Ascending aorta (tissue), 2 donors: ENCODE measurements at regions of chr2 and their contacts with region 1.

Region 1: DNA sequence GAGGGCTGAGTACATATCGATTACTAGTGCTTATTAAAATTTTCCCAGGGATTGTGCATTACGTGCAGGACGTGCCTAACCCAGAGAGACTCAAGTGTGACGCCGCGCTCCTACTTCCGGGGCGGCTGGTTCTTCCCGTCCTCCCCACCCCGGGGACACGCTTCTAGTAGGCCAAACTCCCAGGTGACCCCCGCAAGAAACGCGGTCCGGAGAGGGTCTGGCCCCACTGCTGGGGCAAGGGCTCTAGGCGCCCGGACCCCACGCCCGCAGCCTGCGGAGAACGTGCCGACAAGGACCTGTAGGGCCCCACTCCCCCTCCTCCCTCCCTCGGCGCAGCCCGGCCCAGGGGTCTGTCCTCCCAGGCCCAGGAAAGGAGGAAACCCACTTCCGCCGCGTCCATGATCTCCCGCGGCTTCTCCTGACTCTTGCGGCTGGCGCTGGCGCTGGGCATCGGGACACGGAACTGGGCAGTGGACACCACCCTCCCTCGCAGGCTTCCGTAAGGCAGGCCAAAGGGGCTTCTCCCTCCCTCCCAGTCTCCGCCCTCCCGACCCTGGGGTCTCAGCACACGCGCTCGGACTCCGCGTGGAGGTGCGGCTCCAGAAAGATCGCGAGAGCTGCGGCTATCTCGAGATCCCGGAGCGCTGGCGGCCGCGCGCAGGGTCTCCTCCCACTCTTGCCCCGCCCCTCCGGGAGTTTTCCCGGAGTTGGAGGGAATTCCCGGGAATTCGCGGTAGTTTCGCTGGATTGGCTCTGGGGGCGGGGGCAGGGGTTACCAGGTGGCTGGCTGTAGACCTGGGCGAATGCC is at the start of gene DARS1:
- DNase-seq: peak; percentile 59 to 95
- H3K4me3 ChIP-seq: peak within 1 kb of the TSS; percentile 83 to 92
- H3K27ac ChIP-seq: peak within 1 kb of the TSS; percentile 92 to 94
- H3K4me1 ChIP-seq: peaks cover 4 to 7% of the 10 kb centered on the region in 2 donors
- H3K27me3 ChIP-seq: no peaks in the 10 kb centered on the region
- CTCF ChIP-seq: no peak
- total RNA-seq, gene DARS1: 11.6 TPM

Region 2: DNA sequence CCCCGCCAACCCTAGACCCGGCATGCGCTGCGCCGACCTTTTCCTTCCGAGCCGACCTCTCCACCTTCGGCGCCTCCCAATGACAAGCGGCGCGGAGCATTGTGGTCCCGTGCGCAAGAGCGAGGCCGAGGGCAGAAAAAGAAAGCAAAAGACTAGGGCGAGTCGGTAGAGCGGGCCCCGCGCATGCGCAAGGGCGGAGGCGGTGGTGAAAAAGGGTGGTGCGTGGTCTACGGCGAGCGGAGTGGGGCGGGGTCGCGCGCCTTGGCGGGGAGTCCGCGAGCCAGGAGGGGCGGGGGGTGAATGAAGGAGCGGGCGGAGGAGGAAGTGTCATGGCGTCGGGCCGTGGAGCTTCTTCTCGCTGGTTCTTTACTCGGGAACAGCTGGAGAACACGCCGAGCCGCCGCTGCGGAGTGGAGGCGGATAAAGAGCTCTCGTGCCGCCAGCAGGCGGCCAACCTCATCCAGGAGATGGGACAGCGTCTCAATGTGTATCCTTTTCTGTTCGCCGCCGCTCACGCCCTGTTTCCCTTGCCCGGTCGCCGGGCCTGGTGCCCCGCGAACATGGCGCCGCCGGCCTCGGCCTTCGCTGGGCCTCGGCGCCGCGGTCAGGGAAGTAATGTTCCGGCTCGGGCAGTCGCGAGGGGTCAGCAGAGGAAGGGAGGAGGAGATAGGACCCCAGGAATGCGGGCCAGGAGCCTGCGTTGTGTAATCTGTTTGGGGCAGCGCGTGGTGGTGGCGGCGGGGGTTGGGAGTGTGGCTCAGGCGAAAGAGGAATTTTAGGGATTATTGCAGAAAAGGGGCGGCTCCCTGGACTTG is 1066.5 kb before region 1 on chr2 and contains the start of gene CCNT2:
- intact Hi-C with region 1: loop called (anchors 2 kb)
- DNase-seq: peak; percentile 97 to 99
- H3K4me3 ChIP-seq: peak within 1 kb of the TSS; percentile 83 to 88
- H3K27ac ChIP-seq: peak within 1 kb of the TSS; percentile 96 to 98
- H3K4me1 ChIP-seq: peaks cover 5 to 25% of the 10 kb centered on the region in 2 donors
- H3K27me3 ChIP-seq: no peaks in the 10 kb centered on the region
- CTCF ChIP-seq: no peak
- total RNA-seq, gene CCNT2: 14.2 TPM

Region 3: GRCh38 chr2:135052042-135052876 is 933.0 kb before region 1 on chr2 and contains the start of gene RAB3GAP1:
- intact Hi-C with region 1: loop called (anchors 10 kb)
- DNase-seq: peak; percentile 33 to 90
- H3K4me3 ChIP-seq: peak within 1 kb of the TSS; percentile 71 to 75
- H3K27ac ChIP-seq: peak within 1 kb of the TSS; percentile 96 to 97
- H3K4me1 ChIP-seq: peaks cover 5 to 35% of the 10 kb centered on the region in 2 donors
- H3K27me3 ChIP-seq: no peaks in the 10 kb centered on the region
- CTCF ChIP-seq: no peak
- total RNA-seq, gene RAB3GAP1: 14.8 TPM

Region 4: DNA sequence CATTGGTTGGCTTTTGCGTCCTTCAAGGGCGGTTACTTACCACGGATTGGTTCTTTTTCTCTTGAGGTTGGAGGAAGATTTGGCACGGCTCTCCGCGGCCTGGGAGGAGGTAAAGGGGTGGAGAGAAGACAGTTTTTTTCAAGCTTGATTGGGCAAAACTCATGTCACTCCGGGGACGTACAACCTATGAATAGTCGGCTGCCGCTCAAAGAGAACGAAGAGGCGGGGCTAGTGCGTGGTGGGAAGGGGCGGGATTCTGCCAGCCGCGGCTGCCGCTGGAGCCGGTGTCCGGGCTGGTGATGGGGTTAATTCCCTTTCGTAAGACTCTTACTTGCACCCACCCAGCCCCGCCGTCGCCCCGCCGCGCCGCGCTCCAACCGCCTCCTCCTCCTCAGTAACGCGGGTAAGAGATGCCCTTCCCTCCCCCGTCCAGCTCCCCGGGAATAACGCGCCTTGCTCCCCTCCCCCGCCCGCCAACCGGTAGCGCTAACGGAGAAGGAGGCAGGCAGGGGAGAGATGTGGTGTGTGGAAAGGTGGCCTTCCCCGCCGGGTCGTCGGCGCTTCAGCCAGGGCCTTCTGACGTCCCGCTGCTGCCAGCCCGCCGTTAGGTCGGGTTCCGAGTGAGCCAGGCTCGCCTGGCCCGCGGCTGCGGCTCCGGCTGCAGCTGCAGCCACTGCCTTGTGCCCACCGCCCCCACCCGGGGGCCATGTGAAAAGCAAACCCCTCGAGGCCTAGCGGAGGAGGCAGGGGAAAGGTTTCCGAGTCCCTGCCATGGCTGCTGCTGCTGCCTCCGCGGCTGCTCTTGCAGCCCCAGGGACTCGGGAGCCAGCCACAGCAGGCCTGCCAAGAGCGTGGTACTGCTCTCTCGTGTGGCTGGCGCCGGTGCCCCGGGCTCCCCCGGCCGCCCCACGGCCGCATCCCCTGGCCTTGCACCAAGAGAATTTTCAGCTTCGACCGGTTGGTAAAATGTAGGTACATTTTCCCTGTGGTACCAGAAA is 453.7 kb before region 1 on chr2 and contains the start of gene R3HDM1:
- intact Hi-C with region 1: loop called (anchors 2 kb)
- DNase-seq: peak; percentile 97 to 100
- H3K4me3 ChIP-seq: peak within 1 kb of the TSS; percentile 78 to 82
- H3K27ac ChIP-seq: peak within 1 kb of the TSS; percentile 86 to 95
- H3K4me1 ChIP-seq: peaks cover 0 to 10% of the 10 kb centered on the region in 2 donors
- H3K27me3 ChIP-seq: no peaks in the 10 kb centered on the region
- CTCF ChIP-seq: peak in 1 of 3 experiments; percentile 4
- total RNA-seq, gene R3HDM1: 5.0 TPM

Region 5: GRCh38 chr2:135657806-135658582 is 327.2 kb before region 1 on chr2:
- intact Hi-C with region 1: no loop called
- DNase-seq: no peak
- H3K4me3 ChIP-seq: no peak overlapping the region
- H3K27ac ChIP-seq: no peak overlapping the region
- H3K4me1 ChIP-seq: no peaks in the 10 kb centered on the region
- H3K27me3 ChIP-seq: no peaks in the 10 kb centered on the region
- CTCF ChIP-seq: no peak

Region 6: GRCh38 chr2:135741395-135742324 is 243.6 kb before region 1 on chr2 and contains the start of gene UBXN4:
- intact Hi-C with region 1: loop called (anchors 2 kb)
- DNase-seq: peak; percentile 96 to 99
- H3K4me3 ChIP-seq: peak within 1 kb of the TSS; percentile 81 to 92
- H3K27ac ChIP-seq: peak within 1 kb of the TSS; percentile 99
- H3K4me1 ChIP-seq: peaks cover 0 to 17% of the 10 kb centered on the region in 2 donors
- H3K27me3 ChIP-seq: no peaks in the 10 kb centered on the region
- CTCF ChIP-seq: peak in 2 of 3 experiments; percentile 21 to 37
- total RNA-seq, gene UBXN4: 14.8 TPM

Region 7: GRCh38 chr2:135840601-135841000 is 144.6 kb before region 1 on chr2:
- intact Hi-C with region 1: no loop called
- DNase-seq: no peak
- H3K4me3 ChIP-seq: no peak overlapping the region
- H3K27ac ChIP-seq: peak overlapping the region in 1 of 2 donors; percentile 60
- H3K4me1 ChIP-seq: peaks cover 0 to 2% of the 10 kb centered on the region in 2 donors
- H3K27me3 ChIP-seq: no peaks in the 10 kb centered on the region
- CTCF ChIP-seq: no peak

Region 8: GRCh38 chr2:135876066-135876711 is 109.0 kb before region 1 on chr2 and contains the start of gene MCM6:
- intact Hi-C with region 1: loop called (anchors 1 kb)
- DNase-seq: peak; percentile 92 to 98
- H3K4me3 ChIP-seq: peak within 1 kb of the TSS; percentile 82 to 83
- H3K27ac ChIP-seq: peak within 1 kb of the TSS; percentile 87 to 91
- H3K4me1 ChIP-seq: peaks cover 0 to 5% of the 10 kb centered on the region in 2 donors
- H3K27me3 ChIP-seq: no peaks in the 10 kb centered on the region
- CTCF ChIP-seq: no peak
- total RNA-seq, gene MCM6: 62.5 TPM

Region 9: DNA sequence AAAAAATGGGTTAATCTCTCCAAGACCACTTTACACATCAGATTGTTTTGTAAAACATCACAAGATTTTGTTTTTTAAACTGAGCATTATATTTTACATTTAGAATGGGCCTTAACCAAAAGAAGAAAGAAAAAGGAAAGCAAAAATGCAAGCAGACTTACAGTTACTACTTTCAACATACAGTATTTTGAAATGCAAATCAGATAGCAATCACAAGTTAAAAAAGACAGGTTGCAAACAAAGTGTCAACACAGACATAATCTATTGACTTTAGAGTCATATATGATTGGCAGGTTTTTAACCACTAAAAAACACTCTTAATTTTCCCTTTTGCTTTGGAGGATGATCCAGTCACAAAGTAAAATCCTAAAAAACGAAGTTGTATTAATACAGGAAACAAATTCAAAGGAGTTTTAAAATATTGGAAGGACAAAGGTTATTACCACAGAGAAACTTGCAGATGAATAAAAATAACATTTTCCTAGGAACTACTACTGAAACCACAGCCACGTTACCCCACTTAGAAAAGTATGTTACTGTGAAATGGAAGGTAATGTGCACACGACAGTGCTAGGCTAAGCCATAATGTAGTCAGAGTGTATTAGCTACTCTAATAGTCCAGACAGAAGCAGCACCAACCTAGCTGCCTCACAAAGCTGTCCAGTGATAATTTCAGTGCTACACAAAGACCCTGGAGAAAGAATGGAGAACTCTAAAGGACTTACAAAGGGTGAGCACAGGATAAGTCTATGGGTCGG is 22.7 kb before region 1 on chr2:
- intact Hi-C with region 1: no loop called
- DNase-seq: no peak
- H3K4me3 ChIP-seq: no peak overlapping the region
- H3K27ac ChIP-seq: no peak overlapping the region
- H3K4me1 ChIP-seq: no peaks in the 10 kb centered on the region
- H3K27me3 ChIP-seq: no peaks in the 10 kb centered on the region
- CTCF ChIP-seq: no peak

Region 10: DNA sequence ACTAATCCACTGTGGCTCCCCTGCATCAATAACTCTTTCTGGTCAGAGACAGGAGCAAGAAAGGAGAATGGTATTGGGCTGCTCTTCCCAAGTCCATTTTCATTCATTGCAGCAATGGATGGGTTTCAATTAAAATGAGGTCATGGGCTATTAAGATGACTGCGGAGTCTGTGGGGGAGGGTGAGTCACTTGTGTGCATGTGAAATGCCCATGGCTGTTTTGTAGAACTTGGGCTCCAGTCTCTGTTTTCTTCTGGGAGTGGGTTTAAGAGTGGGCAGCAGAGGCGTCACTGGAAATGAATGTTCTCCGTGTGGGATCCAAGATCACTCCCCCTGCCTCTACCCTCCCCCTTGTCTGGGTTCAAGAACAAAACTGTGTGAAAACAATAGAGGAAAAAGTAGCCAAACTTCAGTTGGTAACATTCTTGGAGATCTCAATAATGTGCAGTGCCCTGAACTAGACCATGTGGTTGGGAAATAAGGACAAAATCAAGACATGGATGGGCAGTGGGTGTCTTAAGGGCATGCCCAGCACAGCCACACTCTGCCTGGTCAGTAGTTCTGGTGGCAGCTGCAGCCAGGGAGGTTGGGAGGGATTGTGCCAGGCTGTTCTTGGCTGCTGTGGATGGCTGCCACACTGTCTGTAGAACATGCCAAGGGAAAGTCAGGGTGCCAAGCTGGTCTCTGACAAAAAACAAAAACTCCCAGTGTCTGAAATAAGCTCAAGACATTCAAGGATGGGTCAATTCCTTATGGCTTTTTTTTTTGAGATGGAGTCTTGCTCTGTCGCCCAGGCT is 201.0 kb after region 1 on chr2:
- intact Hi-C with region 1: no loop called
- DNase-seq: no peak
- H3K4me3 ChIP-seq: no peak overlapping the region
- H3K27ac ChIP-seq: no peak overlapping the region
- H3K4me1 ChIP-seq: no peaks in the 10 kb centered on the region
- H3K27me3 ChIP-seq: no peaks in the 10 kb centered on the region
- CTCF ChIP-seq: no peak

Region 11: GRCh38 chr2:136653861-136654260 is 668.6 kb after region 1 on chr2:
- intact Hi-C with region 1: loop called (anchors 5 kb)
- DNase-seq: peak in 1 of 2 donors; percentile 87
- H3K4me3 ChIP-seq: no peak overlapping the region
- H3K27ac ChIP-seq: peak overlapping the region; percentile 82 to 85
- H3K4me1 ChIP-seq: peaks cover 7 to 25% of the 10 kb centered on the region in 2 donors
- H3K27me3 ChIP-seq: no peaks in the 10 kb centered on the region
- CTCF ChIP-seq: no peak